ENCODE measurements at regions of chr7 and their contacts with region 1.

Region 1: DNA sequence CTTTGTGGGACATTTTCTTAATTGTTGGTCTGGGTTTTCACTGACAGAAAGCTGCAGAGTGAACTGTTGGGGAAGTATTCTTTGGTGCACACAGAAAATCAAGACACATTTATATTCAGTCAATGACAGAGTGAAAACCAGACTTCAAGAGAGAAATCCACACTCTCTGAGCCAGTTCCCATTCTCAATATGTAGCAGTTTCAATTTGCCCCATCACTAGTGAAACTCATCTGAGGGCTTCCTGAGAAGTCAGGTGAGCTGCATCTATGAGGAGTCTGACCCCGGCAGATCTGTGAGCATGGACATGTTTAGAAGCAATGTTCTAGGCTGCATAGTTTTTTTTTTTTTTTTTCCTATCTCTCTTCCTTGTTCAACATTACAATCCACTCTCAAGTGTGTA is 163.7 kb upstream of the AHR start:
- DNase-seq: peak; percentile 38
- H3K4me3 Mint-ChIP-seq: no peak overlapping the region
- H3K27ac Mint-ChIP-seq: peak overlapping the region; percentile 46
- H3K4me1 Mint-ChIP-seq: peaks cover 54% of the 10 kb centered on the region
- H3K27me3 Mint-ChIP-seq: no peaks in the 10 kb centered on the region

Region 2: DNA sequence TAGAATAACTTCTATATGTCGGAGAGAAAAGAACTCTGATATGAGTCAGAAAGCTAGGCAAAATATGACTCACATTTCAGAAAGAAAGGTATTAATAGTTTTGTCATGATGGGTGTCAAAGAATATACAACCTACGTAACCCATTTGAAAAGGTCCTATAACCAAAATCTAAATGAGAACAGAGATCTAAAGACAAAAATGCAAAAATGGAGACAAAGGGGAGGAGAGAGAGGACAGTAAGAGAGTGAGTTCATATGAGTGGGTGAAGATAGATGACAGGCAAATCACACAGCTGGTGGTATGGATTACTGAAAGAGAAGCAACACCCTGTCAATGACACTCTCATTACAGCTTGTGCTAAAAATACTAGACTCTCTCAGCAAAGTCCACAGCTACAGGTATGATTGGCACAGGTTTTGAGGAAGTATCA is 514.8 kb before region 1 on chr7:
- CTCF ChIA-PET with region 1: no interaction called
- intact Hi-C with region 1: loop called (anchors 1 kb)
- DNase-seq: peak; percentile 33
- H3K4me3 Mint-ChIP-seq: peak overlapping the region; percentile 23
- H3K27ac Mint-ChIP-seq: peak overlapping the region; percentile 81
- H3K4me1 Mint-ChIP-seq: peaks cover 13% of the 10 kb centered on the region
- H3K27me3 Mint-ChIP-seq: no peaks in the 10 kb centered on the region

Region 3: GRCh38 chr7:16708980-16709379 is 425.8 kb before region 1 on chr7:
- CTCF ChIA-PET with region 1: no interaction called
- intact Hi-C with region 1: loop called (anchors 5 kb)
- DNase-seq: no peak
- H3K4me3 Mint-ChIP-seq: no peak overlapping the region
- H3K27ac Mint-ChIP-seq: no peak overlapping the region
- H3K4me1 Mint-ChIP-seq: peaks cover 25% of the 10 kb centered on the region
- H3K27me3 Mint-ChIP-seq: no peaks in the 10 kb centered on the region

Region 4: DNA sequence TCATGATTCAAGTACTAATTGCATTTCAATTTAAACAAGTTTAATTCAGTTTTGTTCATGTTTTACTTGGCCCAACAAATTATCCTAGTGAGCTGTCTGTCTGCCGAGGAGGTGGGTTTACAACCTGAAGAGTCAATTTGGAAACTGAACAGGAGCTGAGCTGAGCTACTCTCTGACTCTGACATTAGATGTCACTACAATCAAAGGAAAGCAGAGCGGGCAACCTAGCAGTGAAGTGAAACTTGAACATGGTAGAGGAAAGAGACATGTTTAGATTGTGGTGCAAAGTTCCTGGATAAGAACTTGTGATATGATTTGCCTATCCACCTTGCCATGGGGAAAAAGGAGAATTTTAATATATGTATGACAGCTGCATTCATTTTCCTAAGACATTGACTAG is 243.4 kb before region 1 on chr7:
- CTCF ChIA-PET with region 1: no interaction called
- intact Hi-C with region 1: no loop called
- DNase-seq: peak; percentile 21
- H3K4me3 Mint-ChIP-seq: no peak overlapping the region
- H3K27ac Mint-ChIP-seq: no peak overlapping the region
- H3K4me1 Mint-ChIP-seq: peaks cover 5% of the 10 kb centered on the region
- H3K27me3 Mint-ChIP-seq: no peaks in the 10 kb centered on the region

Region 5: DNA sequence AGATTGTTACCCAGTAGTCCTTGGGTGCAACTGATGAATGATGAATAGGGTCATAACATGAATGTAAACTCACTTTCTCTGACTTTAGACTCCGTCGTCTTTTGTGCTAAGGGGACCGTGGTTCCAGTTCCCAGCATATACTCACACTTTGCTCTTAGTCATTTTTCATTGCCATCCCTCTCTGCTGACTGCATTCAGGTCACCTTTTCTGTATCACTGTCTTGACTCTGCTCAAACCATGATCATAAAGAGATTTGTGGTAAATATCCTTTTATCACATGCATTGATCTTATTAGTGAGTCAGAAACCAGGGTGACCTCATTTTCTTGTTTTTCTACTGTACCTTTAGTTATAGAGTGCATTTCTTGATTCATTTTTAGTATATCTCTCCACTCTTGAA is 111.9 kb before region 1 on chr7:
- CTCF ChIA-PET with region 1: no interaction called
- intact Hi-C with region 1: loop called (anchors 1 kb)
- DNase-seq: peak; percentile 49
- H3K4me3 Mint-ChIP-seq: no peak overlapping the region
- H3K27ac Mint-ChIP-seq: no peak overlapping the region
- H3K4me1 Mint-ChIP-seq: peaks cover 10% of the 10 kb centered on the region
- H3K27me3 Mint-ChIP-seq: peaks cover 8% of the 10 kb centered on the region

Region 6: GRCh38 chr7:17152721-17153120 is 17.9 kb after region 1 on chr7:
- CTCF ChIA-PET with region 1: interaction called, 5 read pairs
- intact Hi-C with region 1: loop called (anchors 1 kb)
- DNase-seq: no peak
- H3K4me3 Mint-ChIP-seq: no peak overlapping the region
- H3K27ac Mint-ChIP-seq: no peak overlapping the region
- H3K4me1 Mint-ChIP-seq: peaks cover 30% of the 10 kb centered on the region
- H3K27me3 Mint-ChIP-seq: peaks cover 2% of the 10 kb centered on the region

Region 7: DNA sequence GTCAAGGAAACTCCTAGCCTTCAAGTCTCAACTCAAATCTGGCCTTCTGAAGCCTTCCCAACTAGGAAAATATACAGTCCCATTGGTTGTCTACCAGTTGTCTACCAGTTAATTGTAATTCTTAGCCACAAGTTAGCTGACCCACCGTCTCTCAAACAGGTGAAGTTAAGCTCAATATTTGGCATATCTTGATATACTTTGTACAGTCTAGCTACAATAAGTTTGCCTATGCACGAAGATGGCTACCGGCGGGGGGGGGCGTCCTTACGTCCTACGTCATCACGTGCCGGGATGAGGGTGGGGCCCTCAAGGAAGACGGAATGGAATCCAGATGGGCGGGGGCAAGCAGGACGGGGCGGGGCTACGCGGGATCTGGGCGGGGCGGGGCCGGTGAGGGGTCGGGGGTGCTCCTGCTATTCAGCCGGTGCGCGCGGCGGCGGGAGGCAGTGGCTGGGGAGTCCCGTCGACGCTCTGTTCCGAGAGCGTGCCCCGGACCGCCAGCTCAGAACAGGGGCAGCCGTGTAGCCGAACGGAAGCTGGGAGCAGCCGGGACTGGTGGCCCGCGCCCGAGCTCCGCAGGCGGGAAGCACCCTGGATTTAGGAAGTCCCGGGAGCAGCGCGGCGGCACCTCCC is 163.5 kb after region 1 on chr7 and contains the start of gene AHR:
- CTCF ChIA-PET with region 1: no interaction called
- intact Hi-C with region 1: loop called (anchors 1 kb)
- DNase-seq: peak; percentile 97
- H3K4me3 Mint-ChIP-seq: peak within 1 kb of the TSS; percentile 92
- H3K27ac Mint-ChIP-seq: peak within 1 kb of the TSS; percentile 91
- H3K4me1 Mint-ChIP-seq: peaks cover 25% of the 10 kb centered on the region
- H3K27me3 Mint-ChIP-seq: no peaks in the 10 kb centered on the region
- total RNA-seq, gene AHR: 24.5 to 27.5 TPM

Region 8: GRCh38 chr7:17402628-17403278 is 268.0 kb after region 1 on chr7:
- CTCF ChIA-PET with region 1: no interaction called
- intact Hi-C with region 1: loop called (anchors 1 kb)
- DNase-seq: no peak
- H3K4me3 Mint-ChIP-seq: peak overlapping the region; percentile 4
- H3K27ac Mint-ChIP-seq: peak overlapping the region; percentile 79
- H3K4me1 Mint-ChIP-seq: peaks cover 26% of the 10 kb centered on the region
- H3K27me3 Mint-ChIP-seq: peaks cover 13% of the 10 kb centered on the region

Measured in activated naive CD4-positive, alpha-beta T cell treated with anti-CD3 and anti-CD28 coated beads for 36 hours (primary cell).